GM12878 (cell line): ENCODE measurements at regions of chr2 and their contacts with region 1.

Region 1: DNA sequence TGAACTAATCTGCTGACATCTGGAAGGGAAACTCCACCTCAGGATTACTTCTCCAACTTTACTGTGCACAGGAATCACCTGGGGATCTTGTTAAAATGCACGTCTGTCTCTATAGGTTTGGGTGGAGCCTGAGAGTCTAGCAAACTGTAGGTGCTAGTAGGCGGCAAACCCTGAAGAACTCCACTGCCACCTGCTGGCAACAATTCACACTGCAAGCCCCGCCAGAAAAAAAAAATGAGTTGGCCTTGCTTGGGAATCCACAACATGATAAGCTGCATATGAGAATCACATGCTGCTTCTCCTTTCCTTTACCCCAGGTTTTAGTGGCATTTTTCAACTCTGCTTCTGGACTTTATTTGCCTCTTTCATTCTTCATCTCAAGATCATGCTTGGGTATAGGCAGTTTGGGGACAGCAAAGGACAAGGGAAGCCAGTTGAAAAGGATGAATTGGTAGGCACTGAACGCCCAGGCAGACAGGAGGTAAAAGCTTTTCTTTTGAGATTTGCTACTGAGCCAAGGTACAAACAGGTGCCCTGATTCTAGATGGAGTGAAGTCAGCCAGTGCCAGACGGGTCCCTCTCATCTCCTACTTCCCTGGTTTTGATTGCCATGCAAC is 88.8 kb downstream of the VIT start:
- DNase-seq: no peak
- ATAC-seq: peak; percentile 91
- H3K4me3 ChIP-seq: no peak overlapping the region
- H3K27ac ChIP-seq: no peak overlapping the region
- H3K4me1 ChIP-seq: 0 out of 2 replicates have a peak, but pooled peaks cover 6% of the 10 kb centered on the region
- H3K27me3 ChIP-seq: peaks cover 0 to 3% of the 10 kb centered on the region in 2 experiments; a peak in 1 of 4 replicates
- CTCF ChIP-seq: peak; percentile 88 to 98 (median 90)
- EP300 ChIP-seq: no peak
- POLR2A ChIP-seq: no peak
- RAD21 ChIP-seq: peak; percentile 65

Region 2: GRCh38 chr2:36355151-36355889 is 430.0 kb before region 1 on chr2 and contains the start of gene CRIM1:
- CTCF ChIA-PET with region 1: interaction called, 7 read pairs
- POLR2A ChIA-PET with region 1: no interaction called
- RAD21 ChIA-PET with region 1: no interaction called
- SMC1A ChIA-PET with region 1: no interaction called
- in situ Hi-C with region 1: no loop called
- intact Hi-C with region 1: loop called (anchors 10 kb)
- DNase-seq: no peak
- ATAC-seq: peak; percentile 45
- H3K4me3 ChIP-seq: peak within 1 kb of the TSS; percentile 49; the same call in 1 of the 2 replicates
- H3K27ac ChIP-seq: no peak within 1 kb of the TSS
- H3K4me1 ChIP-seq: peaks cover 9% of the 10 kb centered on the region
- H3K27me3 ChIP-seq: peaks cover 1 to 7% of the 10 kb centered on the region in 2 experiments; a peak in 3 of 4 replicates
- CTCF ChIP-seq: no peak
- EP300 ChIP-seq: no peak
- POLR2A ChIP-seq: 0 out of 2 replicates have a peak, but pooled peaks have one; percentile 34
- RAD21 ChIP-seq: no peak
- polyA plus RNA-seq, gene CRIM1: 2.1 to 2.4 TPM

Region 3: DNA sequence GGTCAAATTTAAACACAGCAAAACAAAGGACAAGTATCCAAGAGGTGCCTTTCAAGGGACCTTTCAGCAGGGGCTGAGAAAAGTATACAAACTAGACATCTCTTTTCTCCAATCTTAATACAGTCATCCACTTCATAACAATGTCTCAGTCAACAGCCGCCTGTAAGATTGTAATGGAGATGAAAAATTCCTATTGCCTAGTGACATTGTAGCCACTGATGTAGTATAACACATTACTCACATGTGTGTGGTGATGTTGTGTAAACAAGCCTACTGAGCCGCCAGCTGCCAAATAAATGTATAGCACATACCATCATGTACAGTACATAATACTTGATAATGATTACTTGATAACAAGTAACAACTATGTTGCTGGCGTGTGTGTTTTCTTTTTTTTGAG is 57.7 kb before region 1 on chr2:
- CTCF ChIA-PET with region 1: no interaction called
- POLR2A ChIA-PET with region 1: no interaction called
- RAD21 ChIA-PET with region 1: no interaction called
- SMC1A ChIA-PET with region 1: no interaction called
- in situ Hi-C with region 1: no loop called
- intact Hi-C with region 1: no loop called
- DNase-seq: no peak
- ATAC-seq: no peak
- H3K4me3 ChIP-seq: no peak overlapping the region
- H3K27ac ChIP-seq: no peak overlapping the region
- H3K4me1 ChIP-seq: no peaks in the 10 kb centered on the region
- H3K27me3 ChIP-seq: no peaks in the 10 kb centered on the region
- CTCF ChIP-seq: no peak
- EP300 ChIP-seq: no peak
- POLR2A ChIP-seq: no peak
- RAD21 ChIP-seq: no peak

Region 4: GRCh38 chr2:36770542-36771287 is 14.6 kb before region 1 on chr2:
- CTCF ChIA-PET with region 1: interaction called, 40 read pairs
- POLR2A ChIA-PET with region 1: no interaction called
- RAD21 ChIA-PET with region 1: interaction called, 6 read pairs
- SMC1A ChIA-PET with region 1: interaction called, 7 read pairs
- in situ Hi-C with region 1: no loop called
- intact Hi-C with region 1: no loop called
- DNase-seq: no peak
- ATAC-seq: peak; percentile 89
- H3K4me3 ChIP-seq: no peak overlapping the region
- H3K27ac ChIP-seq: no peak overlapping the region
- H3K4me1 ChIP-seq: no peaks in the 10 kb centered on the region
- H3K27me3 ChIP-seq: no peaks in the 10 kb centered on the region; a peak in 3 of 4 replicates
- CTCF ChIP-seq: peak; percentile 54 to 74 (median 59)
- EP300 ChIP-seq: no peak
- POLR2A ChIP-seq: no peak
- RAD21 ChIP-seq: peak; percentile 21; the same call in 1 of the 2 replicates

Region 5: GRCh38 chr2:36800381-36800780 is 15.1 kb after region 1 on chr2:
- CTCF ChIA-PET with region 1: interaction called, 29 read pairs
- POLR2A ChIA-PET with region 1: no interaction called
- RAD21 ChIA-PET with region 1: no interaction called
- SMC1A ChIA-PET with region 1: interaction called, 8 read pairs
- in situ Hi-C with region 1: no loop called
- intact Hi-C with region 1: no loop called
- DNase-seq: no peak
- ATAC-seq: no peak
- H3K4me3 ChIP-seq: no peak overlapping the region
- H3K27ac ChIP-seq: no peak overlapping the region
- H3K4me1 ChIP-seq: no peaks in the 10 kb centered on the region
- H3K27me3 ChIP-seq: peaks cover 0 to 1% of the 10 kb centered on the region in 2 experiments; a peak in 1 of 4 replicates
- CTCF ChIP-seq: no peak
- EP300 ChIP-seq: no peak
- POLR2A ChIP-seq: no peak
- RAD21 ChIP-seq: no peak

Region 6: GRCh38 chr2:36820942-36821605 is 35.8 kb after region 1 on chr2:
- CTCF ChIA-PET with region 1: interaction called, 11 read pairs
- POLR2A ChIA-PET with region 1: no interaction called
- RAD21 ChIA-PET with region 1: no interaction called
- SMC1A ChIA-PET with region 1: no interaction called
- in situ Hi-C with region 1: no loop called
- intact Hi-C with region 1: no loop called
- DNase-seq: no peak
- ATAC-seq: no peak
- H3K4me3 ChIP-seq: no peak overlapping the region
- H3K27ac ChIP-seq: no peak overlapping the region
- H3K4me1 ChIP-seq: no peaks in the 10 kb centered on the region
- H3K27me3 ChIP-seq: peaks cover 0 to 3% of the 10 kb centered on the region in 2 experiments; a peak in 2 of 4 replicates
- CTCF ChIP-seq: no peak
- EP300 ChIP-seq: no peak
- POLR2A ChIP-seq: no peak
- RAD21 ChIP-seq: no peak

Region 7: GRCh38 chr2:36918307-36918706 is 133.0 kb after region 1 on chr2:
- CTCF ChIA-PET with region 1: interaction called, 9 read pairs
- POLR2A ChIA-PET with region 1: no interaction called
- RAD21 ChIA-PET with region 1: interaction called, 3 read pairs
- SMC1A ChIA-PET with region 1: interaction called, 4 read pairs
- in situ Hi-C with region 1: no loop called
- intact Hi-C with region 1: loop called (anchors 2 kb)
- DNase-seq: no peak
- ATAC-seq: no peak
- H3K4me3 ChIP-seq: no peak overlapping the region
- H3K27ac ChIP-seq: no peak overlapping the region
- H3K4me1 ChIP-seq: no peaks in the 10 kb centered on the region; the same call in 1 of the 2 replicates
- H3K27me3 ChIP-seq: no peaks in the 10 kb centered on the region
- CTCF ChIP-seq: peak in 2 of 3 experiments; percentile 13 to 22; a peak in 2 of 6 replicates
- EP300 ChIP-seq: no peak
- POLR2A ChIP-seq: no peak
- RAD21 ChIP-seq: peak; percentile 21; the same call in 1 of the 2 replicates

Region 8: GRCh38 chr2:37005118-37005868 is 220.0 kb after region 1 on chr2:
- CTCF ChIA-PET with region 1: interaction called, 8 read pairs
- POLR2A ChIA-PET with region 1: no interaction called
- RAD21 ChIA-PET with region 1: no interaction called
- SMC1A ChIA-PET with region 1: interaction called, 4 read pairs
- in situ Hi-C with region 1: no loop called
- intact Hi-C with region 1: loop called (anchors 2 kb)
- DNase-seq: peak; percentile 64
- ATAC-seq: peak; percentile 99
- H3K4me3 ChIP-seq: peak overlapping the region; percentile 21; the same call in 1 of the 2 replicates
- H3K27ac ChIP-seq: peak overlapping the region; percentile 6
- H3K4me1 ChIP-seq: peaks cover 19% of the 10 kb centered on the region
- H3K27me3 ChIP-seq: no peaks in the 10 kb centered on the region
- CTCF ChIP-seq: peak; percentile 55 to 63 (median 60); a peak in 5 of 6 replicates
- EP300 ChIP-seq: peak in 1 of 2 experiments; percentile 51; a peak in 2 of 4 replicates
- POLR2A ChIP-seq: no peak
- RAD21 ChIP-seq: peak; percentile 53